Heart left ventricle (tissue), 16 donors: ENCODE measurements at regions of chr15 and their contacts with region 1.

Region 1: DNA sequence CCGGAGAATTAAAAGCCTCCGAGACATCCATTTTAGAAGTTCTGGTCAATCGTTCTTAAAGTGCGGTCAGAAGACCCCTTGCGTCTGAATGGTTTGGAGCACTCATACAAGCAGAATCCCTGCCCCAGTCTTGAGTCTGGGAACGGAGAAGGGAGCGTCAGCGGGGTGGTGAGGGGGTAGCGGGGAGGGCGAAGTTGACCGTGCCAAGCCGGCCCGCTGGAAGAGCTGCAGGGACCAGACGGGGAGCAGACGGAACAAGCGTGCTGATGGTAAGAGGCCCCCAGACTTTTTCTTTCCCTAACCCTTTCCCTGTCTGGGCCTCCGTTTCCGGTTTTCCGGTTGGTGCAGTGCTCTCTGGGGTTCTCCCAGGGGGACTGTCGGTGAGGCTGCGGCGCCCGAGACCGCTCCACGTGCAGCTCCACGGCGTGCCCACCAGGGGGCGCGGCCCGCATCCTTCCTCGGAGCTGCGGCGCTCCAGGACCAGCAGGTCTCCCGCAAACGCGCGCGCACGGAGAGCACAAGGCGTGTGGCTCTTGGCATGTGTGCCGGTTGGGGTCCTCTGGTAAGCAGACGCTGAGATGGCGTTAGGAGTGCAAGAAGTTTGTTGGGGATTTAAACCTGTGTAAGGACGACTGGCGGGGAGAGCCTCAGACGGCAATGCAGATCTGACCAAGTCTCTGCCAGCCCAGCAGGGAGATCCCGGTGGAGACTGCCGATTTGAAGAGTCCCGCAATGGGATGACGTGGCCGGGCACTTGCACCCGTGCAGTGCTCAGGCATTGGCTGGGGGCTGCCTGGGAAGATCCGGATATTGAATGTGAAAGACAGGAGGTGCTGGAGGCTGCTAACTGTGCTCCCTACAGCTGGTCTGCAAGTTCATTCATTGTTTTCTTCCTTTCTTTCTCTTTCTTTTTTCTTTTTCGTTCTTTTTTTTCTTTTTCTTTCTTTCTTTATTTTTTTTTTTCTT is 19.2 kb upstream of the CORO2B start:
- DNase-seq: peak; percentile 78 to 92 (median 81)
- ATAC-seq: peak; percentile 81 to 95 (median 94)
- H3K4me3 ChIP-seq: peak overlapping the region in 11 of 12 donors; percentile 26 to 66 (median 52)
- H3K27ac ChIP-seq: peak overlapping the region in 2 of 12 donors; percentile 15 to 17
- H3K4me1 ChIP-seq: peaks cover 0 to 19% (median 9%) of the 10 kb centered on the region in 12 donors
- H3K27me3 ChIP-seq: peaks cover 0 to 10% (median 0%) of the 10 kb centered on the region in 9 donors
- CTCF ChIP-seq: peak; percentile 93 to 99 (median 97)
- POLR2A ChIP-seq: no peak

Region 2: GRCh38 chr15:68316061-68316804 is 243.4 kb before region 1 on chr15:
- intact Hi-C with region 1: loop called in 1 of 10 experiments (anchors 10 kb)
- DNase-seq: peak in 2 of 5 donors; percentile 16 to 57
- ATAC-seq: peak in 1 of 4 donors; percentile 23
- H3K4me3 ChIP-seq: no peak overlapping the region
- H3K27ac ChIP-seq: peak overlapping the region in 1 of 12 donors; percentile 27
- H3K4me1 ChIP-seq: peaks cover 0 to 15% (median 4%) of the 10 kb centered on the region in 12 donors
- H3K27me3 ChIP-seq: no peaks in the 10 kb centered on the region
- CTCF ChIP-seq: peak in 4 of 12 donors; percentile 9 to 28 (median 10)
- POLR2A ChIP-seq: no peak

Region 3: GRCh38 chr15:68672781-68673205 is 113.2 kb after region 1 on chr15:
- intact Hi-C with region 1: loop called (anchors 1 to 5 kb)
- DNase-seq: no peak
- ATAC-seq: no peak
- H3K4me3 ChIP-seq: no peak overlapping the region
- H3K27ac ChIP-seq: no peak overlapping the region
- H3K4me1 ChIP-seq: peaks cover 0 to 34% (median 10%) of the 10 kb centered on the region in 12 donors
- H3K27me3 ChIP-seq: no peaks in the 10 kb centered on the region
- CTCF ChIP-seq: peak in 3 of 12 donors; percentile 19 to 32 (median 20)
- POLR2A ChIP-seq: no peak

Region 4: DNA sequence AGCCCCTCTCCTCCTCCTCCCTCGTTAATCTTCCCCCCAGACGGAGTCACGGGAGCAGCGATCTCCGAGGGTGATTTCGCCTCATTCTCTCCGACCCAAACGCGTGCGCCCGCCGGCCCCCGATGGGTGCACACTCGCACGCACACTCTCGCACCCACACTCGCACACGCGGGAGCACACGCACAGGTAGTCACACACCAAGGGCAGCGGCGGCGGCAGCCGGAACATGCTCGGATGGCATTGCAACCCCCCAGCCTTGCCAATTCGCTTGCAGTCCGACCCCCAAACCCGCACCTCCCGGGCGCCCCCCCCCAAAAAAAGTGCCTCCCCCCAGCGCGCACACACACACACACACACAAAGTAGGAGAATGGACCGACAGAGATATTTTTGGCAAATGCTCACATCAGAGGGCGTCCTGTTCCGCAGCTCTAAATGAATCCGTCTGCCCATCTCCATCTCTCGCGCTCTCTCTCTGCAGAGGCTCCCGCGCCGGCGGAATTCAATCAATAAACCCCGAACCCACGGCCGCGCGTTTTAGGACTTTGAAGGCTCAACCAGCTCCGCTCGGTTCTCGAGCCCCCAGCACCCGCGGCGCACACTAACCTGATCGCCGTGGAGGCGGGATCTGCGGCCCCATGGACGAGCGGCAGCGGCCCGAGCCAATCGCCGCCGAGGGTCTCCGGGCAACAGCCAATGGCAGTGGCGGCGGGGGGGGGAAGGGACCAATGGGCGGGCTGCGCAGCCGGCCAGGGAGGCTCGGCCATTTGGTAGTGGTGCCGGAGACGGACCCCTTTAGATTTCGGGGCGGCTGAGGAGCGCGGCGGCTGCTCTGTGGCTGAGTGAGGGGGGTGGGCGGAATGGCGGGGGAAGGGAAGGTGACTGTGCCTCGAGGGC is 260.9 kb after region 1 on chr15 and contains the start of gene ANP32A:
- intact Hi-C with region 1: loop called in 3 of 10 experiments (anchors 5 to 10 kb)
- DNase-seq: peak; percentile 97 to 99 (median 99)
- ATAC-seq: peak; percentile 81 to 92 (median 88)
- H3K4me3 ChIP-seq: peak within 1 kb of the TSS; percentile 80 to 98 (median 94)
- H3K27ac ChIP-seq: peak within 1 kb of the TSS; percentile 97 to 100 (median 100)
- H3K4me1 ChIP-seq: peaks cover 0 to 30% (median 19%) of the 10 kb centered on the region in 12 donors
- H3K27me3 ChIP-seq: no peaks in the 10 kb centered on the region
- CTCF ChIP-seq: no peak
- POLR2A ChIP-seq: peak in 1 of 2 donors; percentile 88
- total RNA-seq, gene ANP32A: 55.7 to 202 (median 142) TPM